Activated CD8-positive, alpha-beta T cell treated with anti-CD3 and anti-CD28 coated beads for 36 hours (primary cell): ENCODE measurements at regions of chr7 and their contacts with region 1.

Region 1: GRCh38 chr7:87506246-87507180 is 31.0 kb upstream of the ABCB4 start:
- DNase-seq: no peak
- ATAC-seq: no peak
- H3K4me3 Mint-ChIP-seq: no peak overlapping the region
- H3K27ac Mint-ChIP-seq: no peak overlapping the region
- H3K4me1 Mint-ChIP-seq: peaks cover 2% of the 10 kb centered on the region
- H3K27me3 Mint-ChIP-seq: no peaks in the 10 kb centered on the region
- CTCF ChIP-seq: peak; percentile 53

Region 2: GRCh38 chr7:87480006-87480785 is 26.3 kb before region 1 on chr7:
- CTCF ChIA-PET with region 1: no interaction called
- POLR2A ChIA-PET with region 1: no interaction called
- intact Hi-C with region 1: no loop called
- DNase-seq: no peak
- ATAC-seq: no peak
- H3K4me3 Mint-ChIP-seq: no peak overlapping the region
- H3K27ac Mint-ChIP-seq: no peak overlapping the region
- H3K4me1 Mint-ChIP-seq: peaks cover under 1% of the 10 kb centered on the region
- H3K27me3 Mint-ChIP-seq: peaks cover 31% of the 10 kb centered on the region
- CTCF ChIP-seq: no peak

Region 3: GRCh38 chr7:87541648-87542195 is 35.2 kb after region 1 on chr7:
- CTCF ChIA-PET with region 1: no interaction called
- POLR2A ChIA-PET with region 1: no interaction called
- intact Hi-C with region 1: no loop called
- DNase-seq: no peak
- ATAC-seq: no peak
- H3K4me3 Mint-ChIP-seq: no peak overlapping the region
- H3K27ac Mint-ChIP-seq: no peak overlapping the region
- H3K4me1 Mint-ChIP-seq: peaks cover 3% of the 10 kb centered on the region
- H3K27me3 Mint-ChIP-seq: no peaks in the 10 kb centered on the region
- CTCF ChIP-seq: no peak

Region 4: DNA sequence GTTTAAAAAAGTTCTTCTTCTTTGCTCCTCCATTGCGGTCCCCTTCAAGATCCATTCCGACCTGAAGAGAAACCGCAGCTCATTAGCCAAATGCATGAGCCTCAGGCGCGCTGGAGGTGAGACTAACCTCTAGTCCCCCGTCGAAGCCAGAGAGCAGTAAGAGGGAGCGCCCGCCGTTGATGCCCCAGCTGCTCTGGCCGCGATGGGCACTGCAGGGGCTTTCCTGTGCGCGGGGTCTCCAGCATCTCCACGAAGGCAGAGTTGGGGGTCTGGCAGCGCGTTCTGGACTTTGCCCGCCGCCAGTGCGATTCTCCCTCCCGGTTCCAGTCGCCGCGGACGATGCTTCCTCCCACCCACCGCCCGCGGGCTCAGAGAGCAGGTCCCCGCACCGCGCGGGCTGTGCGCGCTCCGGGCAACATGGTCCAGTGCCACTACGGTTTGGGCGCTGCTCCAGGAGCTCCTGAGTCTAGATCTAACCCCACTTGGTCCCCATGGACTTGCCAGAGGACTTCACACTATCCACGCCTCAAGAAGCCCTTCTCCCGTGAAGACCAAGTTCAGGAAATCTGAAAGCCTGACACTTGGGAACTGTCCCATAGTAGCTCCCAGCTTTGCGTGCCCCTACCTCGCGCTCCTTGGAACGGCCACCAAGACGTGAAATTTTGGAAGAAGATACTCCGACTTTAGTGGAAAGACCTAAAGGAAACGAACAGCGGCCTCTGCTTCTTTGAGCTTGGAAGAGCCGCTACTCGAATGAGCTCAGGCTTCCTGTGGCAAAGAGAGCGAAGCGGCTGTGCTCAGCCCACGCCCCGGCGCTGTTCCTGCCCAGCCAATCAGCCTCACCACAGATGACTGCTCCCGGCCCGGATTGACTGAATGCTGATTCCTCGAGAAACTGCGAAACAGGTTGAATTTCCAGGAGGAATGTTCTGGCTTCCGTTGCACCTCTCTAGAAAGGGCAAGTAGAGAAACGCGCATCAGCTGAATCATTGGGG is 93.9 kb after region 1 on chr7 and contains the start of gene ABCB1:
- CTCF ChIA-PET with region 1: no interaction called
- POLR2A ChIA-PET with region 1: no interaction called
- intact Hi-C with region 1: no loop called
- DNase-seq: peak; percentile 74
- ATAC-seq: peak; percentile 84
- H3K4me3 Mint-ChIP-seq: peak within 1 kb of the TSS; percentile 70
- H3K27ac Mint-ChIP-seq: peak within 1 kb of the TSS; percentile 86
- H3K4me1 Mint-ChIP-seq: peaks cover 31% of the 10 kb centered on the region
- H3K27me3 Mint-ChIP-seq: peaks cover 8% of the 10 kb centered on the region
- CTCF ChIP-seq: no peak
- total RNA-seq, gene ABCB1: 8.8 to 8.9 TPM

Region 5: DNA sequence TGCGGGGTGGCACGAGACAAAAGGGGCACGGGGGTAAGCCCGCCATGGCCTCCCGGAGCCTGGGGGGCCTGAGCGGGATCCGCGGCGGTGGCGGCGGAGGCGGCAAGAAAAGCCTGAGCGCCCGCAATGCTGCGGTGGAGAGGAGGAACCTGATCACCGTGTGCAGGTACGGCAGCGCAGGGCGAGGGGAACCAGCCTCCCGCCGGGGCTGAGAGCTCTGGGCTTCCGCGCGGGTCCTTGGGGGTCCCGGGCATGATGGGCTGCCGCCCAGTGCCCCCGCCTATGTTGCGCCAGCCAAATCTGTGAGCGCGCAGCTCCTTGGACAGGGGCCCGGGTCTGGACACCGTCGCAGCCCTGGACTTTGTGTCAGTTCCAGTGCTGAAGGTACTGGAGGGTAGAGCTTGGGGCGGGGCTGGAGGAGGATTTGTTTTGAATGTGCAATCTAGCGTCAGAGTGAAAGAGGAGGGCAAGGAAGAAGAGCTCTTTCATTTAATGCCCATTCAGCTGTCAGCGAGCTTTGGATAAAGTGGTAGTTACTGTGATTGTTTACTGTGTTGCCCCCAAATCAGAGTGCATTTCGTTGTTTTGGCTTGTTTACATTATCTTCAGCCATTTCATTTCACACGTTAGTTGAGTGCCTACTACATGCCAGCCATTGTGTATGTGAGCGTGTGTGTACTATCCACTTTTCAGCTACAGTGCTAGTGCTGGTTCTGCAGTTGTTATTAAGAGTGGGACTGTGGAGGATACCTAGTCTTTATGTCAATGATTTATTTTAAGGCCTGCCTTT is 122.5 kb after region 1 on chr7:
- CTCF ChIA-PET with region 1: interaction called, 5 read pairs
- POLR2A ChIA-PET with region 1: interaction called, 3 read pairs
- intact Hi-C with region 1: loop called (anchors 10 kb)
- DNase-seq: peak; percentile 64
- ATAC-seq: peak; percentile 14
- H3K4me3 Mint-ChIP-seq: peak overlapping the region; percentile 79
- H3K27ac Mint-ChIP-seq: no peak overlapping the region
- H3K4me1 Mint-ChIP-seq: peaks cover 10% of the 10 kb centered on the region
- H3K27me3 Mint-ChIP-seq: peaks cover 12% of the 10 kb centered on the region
- CTCF ChIP-seq: no peak